ENCODE measurements at regions of chr12 and their contacts with region 1.

Region 1: DNA sequence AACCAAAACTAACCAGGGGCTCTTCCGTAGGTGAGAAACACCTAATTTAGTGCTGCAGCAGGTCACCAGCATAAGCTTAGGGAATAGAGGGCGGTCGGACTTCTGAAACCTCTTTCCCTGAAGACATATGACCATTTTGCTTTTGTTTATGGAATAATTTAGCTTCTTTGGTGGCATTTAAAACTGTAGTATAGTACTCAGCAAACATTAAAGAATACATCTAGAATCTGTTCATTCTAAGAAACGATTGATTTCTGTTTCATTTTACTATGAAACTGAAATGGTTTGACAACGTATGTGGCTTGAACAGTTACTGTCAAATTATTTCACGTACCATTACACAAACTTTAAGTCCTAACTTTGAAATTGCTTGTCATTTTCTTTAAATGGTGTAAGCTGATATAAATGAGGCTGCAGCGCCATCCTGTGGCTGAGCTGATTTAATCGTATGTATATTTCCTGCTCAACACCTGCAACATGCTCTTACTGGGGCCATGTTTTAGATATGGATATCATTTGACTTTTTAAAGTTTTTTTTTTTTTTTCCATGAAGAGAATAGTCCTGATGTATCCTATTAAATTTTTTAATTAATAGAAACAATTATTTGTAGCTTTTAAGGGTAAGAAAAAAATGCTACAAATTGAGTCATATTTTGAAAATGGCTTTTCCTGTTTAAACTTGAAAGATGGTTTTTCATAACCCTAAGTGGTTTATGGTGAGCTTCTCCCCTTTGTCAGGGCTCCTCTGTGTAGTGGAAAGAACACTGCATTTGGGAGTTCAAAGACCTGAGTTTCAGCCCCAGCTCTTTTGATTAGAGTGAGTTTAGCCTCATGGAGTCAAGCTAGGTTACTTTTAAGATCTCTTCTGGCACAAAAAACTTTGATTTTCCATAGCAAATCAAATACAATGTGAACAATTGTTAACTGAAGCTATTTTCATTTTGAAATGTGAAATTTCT is 27.4 kb downstream of the CFAP54 start:
- DNase-seq: peak; percentile 77
- H3K4me3 Mint-ChIP-seq: no peak overlapping the region
- H3K27ac Mint-ChIP-seq: peak overlapping the region; percentile 68
- H3K4me1 Mint-ChIP-seq: peaks cover 15% of the 10 kb centered on the region
- H3K27me3 Mint-ChIP-seq: peaks cover 1% of the 10 kb centered on the region

Region 2: DNA sequence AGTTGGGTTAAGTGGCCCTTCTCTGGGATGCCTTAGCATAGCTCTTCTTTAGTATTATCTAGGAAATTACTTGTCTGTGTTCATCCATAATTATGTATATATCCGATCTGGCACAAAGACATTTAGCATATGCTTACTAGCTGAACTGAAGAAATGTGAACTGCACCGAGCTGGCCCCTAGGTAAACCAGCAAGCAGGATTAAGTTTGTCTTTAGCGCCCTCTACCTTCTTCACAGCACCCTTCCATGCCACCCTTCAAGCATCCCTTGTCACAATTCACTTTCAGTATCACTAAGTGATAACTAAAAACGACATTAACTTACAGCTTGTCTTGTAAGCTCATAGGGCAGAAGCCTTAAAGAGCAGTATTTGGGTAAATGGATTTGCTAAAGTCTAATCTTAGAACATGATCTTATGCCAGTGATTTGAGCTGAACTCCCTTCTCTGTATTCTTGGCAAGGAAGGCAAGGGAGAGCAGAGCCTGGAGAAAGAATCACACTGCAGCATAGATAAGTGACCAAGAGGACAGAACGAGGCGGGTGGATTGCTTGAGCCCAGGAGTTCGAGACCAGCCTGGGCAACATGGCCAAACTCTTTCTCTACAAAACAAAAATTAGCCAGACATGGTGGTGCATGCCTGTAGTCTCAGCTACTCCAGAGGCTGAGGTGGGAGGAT is 518.0 kb before region 1 on chr12:
- intact Hi-C with region 1: loop called (anchors 1 kb)
- DNase-seq: peak; percentile 49
- H3K4me3 Mint-ChIP-seq: no peak overlapping the region
- H3K27ac Mint-ChIP-seq: peak overlapping the region; percentile 24
- H3K4me1 Mint-ChIP-seq: peaks cover 15% of the 10 kb centered on the region
- H3K27me3 Mint-ChIP-seq: no peaks in the 10 kb centered on the region

Region 3: GRCh38 chr12:96061864-96062453 is 454.8 kb before region 1 on chr12:
- intact Hi-C with region 1: loop called (anchors 1 kb)
- DNase-seq: peak; percentile 60
- H3K4me3 Mint-ChIP-seq: no peak overlapping the region
- H3K27ac Mint-ChIP-seq: no peak overlapping the region
- H3K4me1 Mint-ChIP-seq: peaks cover 22% of the 10 kb centered on the region
- H3K27me3 Mint-ChIP-seq: no peaks in the 10 kb centered on the region

Region 4: DNA sequence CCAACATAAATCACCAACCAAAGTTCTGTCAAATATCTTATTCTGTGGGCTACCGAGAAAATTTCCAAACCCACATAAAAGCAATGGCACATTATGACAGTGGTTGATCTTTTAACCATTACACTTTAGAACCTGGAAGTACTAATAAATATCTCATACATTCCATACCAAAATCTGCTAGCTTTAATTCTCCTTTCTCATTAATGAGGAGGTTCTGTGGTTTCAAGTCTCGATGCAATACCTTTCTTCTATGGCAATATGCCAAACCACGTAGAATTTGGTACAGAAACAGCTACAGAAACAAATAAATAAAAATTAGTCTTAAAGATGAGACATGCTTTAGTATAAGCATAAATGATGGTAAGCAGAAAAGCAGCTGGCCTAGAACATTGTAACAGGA is 221.9 kb before region 1 on chr12:
- intact Hi-C with region 1: loop called (anchors 10 kb)
- DNase-seq: no peak
- H3K4me3 Mint-ChIP-seq: no peak overlapping the region
- H3K27ac Mint-ChIP-seq: no peak overlapping the region
- H3K4me1 Mint-ChIP-seq: peaks cover 12% of the 10 kb centered on the region
- H3K27me3 Mint-ChIP-seq: no peaks in the 10 kb centered on the region

Region 5: GRCh38 chr12:96445691-96446583 is 70.8 kb before region 1 on chr12:
- intact Hi-C with region 1: loop called (anchors 2 kb)
- DNase-seq: peak; percentile 72
- H3K4me3 Mint-ChIP-seq: peak overlapping the region; percentile 26
- H3K27ac Mint-ChIP-seq: peak overlapping the region; percentile 94
- H3K4me1 Mint-ChIP-seq: peaks cover 50% of the 10 kb centered on the region
- H3K27me3 Mint-ChIP-seq: no peaks in the 10 kb centered on the region

Region 6: GRCh38 chr12:96501139-96501761 is 15.5 kb before region 1 on chr12:
- intact Hi-C with region 1: no loop called
- DNase-seq: no peak
- H3K4me3 Mint-ChIP-seq: no peak overlapping the region
- H3K27ac Mint-ChIP-seq: peak overlapping the region; percentile 74
- H3K4me1 Mint-ChIP-seq: peaks cover 48% of the 10 kb centered on the region
- H3K27me3 Mint-ChIP-seq: no peaks in the 10 kb centered on the region

Region 7: DNA sequence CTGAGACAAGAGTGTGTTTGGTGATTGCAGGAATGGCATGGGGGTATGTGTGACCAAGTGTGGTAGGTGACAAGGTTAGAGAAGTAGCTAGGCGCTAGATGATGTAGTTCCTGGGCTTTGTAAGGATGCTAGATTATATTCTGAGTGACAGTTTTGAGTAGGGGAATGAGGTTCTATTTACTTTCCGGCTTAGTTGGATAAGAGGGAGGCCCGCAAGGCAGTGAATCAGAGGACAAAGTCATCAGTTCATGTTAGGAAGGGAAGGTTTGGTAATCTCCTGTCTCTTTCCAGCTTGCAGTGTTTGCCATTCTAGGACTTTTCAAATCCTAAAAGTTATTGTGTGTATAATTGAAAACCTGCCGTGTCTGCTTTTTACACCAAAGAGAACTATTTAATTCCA is 17.6 kb after region 1 on chr12:
- intact Hi-C with region 1: no loop called
- DNase-seq: no peak
- H3K4me3 Mint-ChIP-seq: no peak overlapping the region
- H3K27ac Mint-ChIP-seq: no peak overlapping the region
- H3K4me1 Mint-ChIP-seq: no peaks in the 10 kb centered on the region
- H3K27me3 Mint-ChIP-seq: peaks cover 23% of the 10 kb centered on the region